Posterior cingulate gyrus (tissue), 11 donors: ENCODE measurements at regions of chr1 and their contacts with region 1.

Region 1: GRCh38 chr1:26500488-26501175 is 28.4 kb downstream of the HMGN2 start:
- DNase-seq: peak; percentile 75 to 98 (median 88)

Region 2: DNA sequence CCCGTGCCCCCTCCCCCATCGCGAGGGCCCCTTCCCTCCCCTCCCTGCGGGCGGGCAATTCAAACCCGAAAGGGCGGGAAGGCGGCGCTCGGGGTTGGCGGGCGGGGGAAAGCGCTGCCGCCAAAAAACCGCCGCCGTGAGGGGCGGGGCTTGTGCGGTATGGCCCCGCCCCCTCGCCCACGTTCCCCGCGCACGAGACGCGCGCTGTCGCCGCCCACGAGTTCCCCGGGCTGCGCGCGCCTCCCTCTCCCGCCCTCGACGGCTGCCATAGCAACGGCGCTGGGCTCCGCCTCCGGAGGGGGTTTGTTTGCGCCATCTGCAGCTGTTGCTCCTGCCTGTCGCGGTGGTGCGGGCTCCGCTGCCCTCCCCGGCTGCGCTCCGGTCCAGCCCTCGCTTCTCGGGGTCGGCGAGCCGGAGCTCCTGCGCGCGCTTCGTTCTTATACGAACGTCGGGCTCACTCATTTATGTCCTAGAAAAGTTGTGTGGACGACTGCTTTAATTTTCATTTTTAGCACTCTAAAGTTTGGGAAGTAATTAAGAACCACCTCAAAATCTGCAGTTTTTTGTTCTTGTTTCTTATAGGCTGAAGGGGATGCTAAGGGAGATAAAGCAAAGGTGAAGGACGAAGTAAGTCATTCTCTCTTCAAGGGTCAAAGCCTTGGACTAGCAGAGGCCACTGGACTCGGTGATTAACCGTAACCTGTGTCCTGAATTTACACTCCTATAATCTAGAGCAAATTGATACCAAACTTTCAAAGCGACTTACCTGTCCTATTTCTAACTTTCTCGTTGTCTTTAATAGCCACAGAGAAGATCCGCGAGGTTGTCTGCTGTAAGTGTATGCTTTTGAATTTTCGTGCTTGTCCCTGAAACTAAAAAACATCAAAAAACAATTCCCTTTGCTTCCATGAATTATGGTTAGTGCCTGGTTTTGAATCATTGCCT is 27.5 kb before region 1 on chr1:
- intact Hi-C with region 1: loop called (anchors 2 kb)
- DNase-seq: peak; percentile 95 to 100 (median 98)

Region 3: DNA sequence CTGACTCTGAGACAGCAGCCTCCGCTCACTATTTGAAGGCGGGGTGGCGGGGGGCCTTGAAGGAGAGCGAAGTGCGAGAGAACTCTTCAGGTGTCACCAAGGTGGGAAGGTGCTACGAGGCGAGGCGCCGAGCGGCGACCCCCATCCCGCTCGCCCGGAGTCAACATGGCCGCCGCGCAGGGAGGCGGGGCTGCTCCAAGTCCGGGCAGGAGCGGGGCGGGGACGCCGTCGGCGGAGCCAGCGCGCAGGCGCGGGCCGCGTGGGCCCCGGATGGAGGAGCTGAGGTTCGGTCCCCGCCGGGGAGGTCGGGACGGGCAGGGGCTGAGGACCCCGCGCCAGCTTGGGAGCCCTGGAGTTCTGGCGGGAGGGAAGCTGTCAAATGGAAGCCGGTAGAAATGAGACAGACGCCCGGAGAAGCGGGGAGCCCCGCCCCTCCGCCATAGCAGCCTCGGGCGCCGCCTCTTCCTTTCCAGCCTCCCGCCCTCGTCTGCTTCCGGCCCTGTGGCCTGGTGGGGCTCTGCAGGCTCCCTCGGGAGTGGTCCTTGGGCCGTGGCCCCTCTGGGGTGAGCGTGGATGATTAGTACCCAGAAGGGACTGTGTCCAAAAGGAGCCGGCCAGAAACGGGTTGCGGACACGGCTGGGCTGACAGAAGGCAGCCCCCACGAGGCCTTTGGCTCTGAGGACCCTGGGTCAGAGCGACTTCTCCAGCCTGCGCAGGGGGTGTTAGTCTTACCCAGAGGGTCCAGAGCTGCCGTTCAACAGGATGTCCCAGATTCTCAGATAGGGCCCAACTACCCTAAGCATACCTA is 287.3 kb after region 1 on chr1 and contains the start of gene PIGV:
- intact Hi-C with region 1: loop called (anchors 1 kb)
- DNase-seq: peak; percentile 81 to 98 (median 86)